Natural killer cell (primary cell): ENCODE measurements at regions of chr6 and their contacts with region 1.

Region 1: GRCh38 chr6:107847844-107848802 is 24.0 kb upstream of the SCML4 start:
- DNase-seq: peak; percentile 80 to 85
- ATAC-seq: peak; percentile 86 to 94 (median 94)
- H3K4me3 ChIP-seq: peak overlapping the region; percentile 7
- H3K4me3 Mint-ChIP-seq: peak overlapping the region; percentile 78
- H3K27ac ChIP-seq: no peak overlapping the region
- H3K27ac Mint-ChIP-seq: peak overlapping the region in 1 of 2 donors; percentile 51
- H3K4me1 ChIP-seq: peaks cover 12% of the 10 kb centered on the region
- H3K4me1 Mint-ChIP-seq: peaks cover 0 to 12% of the 10 kb centered on the region in 2 donors
- H3K27me3 ChIP-seq: peaks cover 2% of the 10 kb centered on the region
- H3K27me3 Mint-ChIP-seq: no peaks in the 10 kb centered on the region
- CTCF ChIP-seq: peak; percentile 98

Region 2: DNA sequence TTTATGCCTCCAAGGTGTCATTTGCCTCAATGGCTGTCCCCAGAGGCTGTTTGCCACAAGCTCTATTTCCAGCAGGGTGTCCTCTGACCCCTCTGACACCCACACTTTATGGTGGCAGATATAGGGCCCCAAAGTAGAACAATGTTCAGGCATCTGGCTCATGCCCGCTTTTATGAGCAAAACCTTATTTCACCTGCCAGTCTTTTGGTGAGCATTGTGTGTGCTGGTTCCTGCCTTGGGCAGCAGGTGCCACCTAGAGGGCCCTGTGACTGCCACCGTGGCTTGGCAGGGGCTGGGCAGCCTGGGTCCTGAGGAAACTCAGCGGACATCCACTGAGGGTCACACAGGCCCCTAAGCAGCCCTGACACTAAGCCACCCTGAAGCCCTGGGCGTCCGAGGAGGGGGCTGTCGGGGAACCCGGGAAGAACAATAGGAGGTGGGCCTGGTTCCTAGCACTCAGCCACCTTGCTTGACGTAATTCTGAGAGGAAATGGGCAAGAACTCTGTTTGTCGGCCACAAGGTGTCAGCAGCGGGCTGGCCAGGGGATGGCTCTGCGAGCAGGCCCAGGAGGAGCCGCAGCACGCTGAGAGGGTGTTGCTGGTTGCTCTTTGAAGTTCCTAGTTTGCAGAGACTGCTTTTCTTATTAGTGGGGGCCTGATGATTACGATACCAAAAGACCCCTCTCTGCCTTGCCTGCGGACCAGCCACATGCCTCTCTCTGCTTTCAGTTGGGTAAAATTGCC is 173.0 kb before region 1 on chr6:
- intact Hi-C with region 1: loop called (anchors 1 kb)
- DNase-seq: peak; percentile 81 to 94
- ATAC-seq: peak; percentile 92 to 99 (median 99)
- H3K4me3 ChIP-seq: no peak overlapping the region
- H3K4me3 Mint-ChIP-seq: no peak overlapping the region
- H3K27ac ChIP-seq: peak overlapping the region; percentile 20
- H3K27ac Mint-ChIP-seq: peak overlapping the region in 1 of 2 donors; percentile 78
- H3K4me1 ChIP-seq: peaks cover 21% of the 10 kb centered on the region
- H3K4me1 Mint-ChIP-seq: peaks cover 8 to 11% of the 10 kb centered on the region in 2 donors
- H3K27me3 ChIP-seq: no peaks in the 10 kb centered on the region
- H3K27me3 Mint-ChIP-seq: peaks cover 0 to 6% of the 10 kb centered on the region in 2 donors
- CTCF ChIP-seq: peak; percentile 90

Region 3: DNA sequence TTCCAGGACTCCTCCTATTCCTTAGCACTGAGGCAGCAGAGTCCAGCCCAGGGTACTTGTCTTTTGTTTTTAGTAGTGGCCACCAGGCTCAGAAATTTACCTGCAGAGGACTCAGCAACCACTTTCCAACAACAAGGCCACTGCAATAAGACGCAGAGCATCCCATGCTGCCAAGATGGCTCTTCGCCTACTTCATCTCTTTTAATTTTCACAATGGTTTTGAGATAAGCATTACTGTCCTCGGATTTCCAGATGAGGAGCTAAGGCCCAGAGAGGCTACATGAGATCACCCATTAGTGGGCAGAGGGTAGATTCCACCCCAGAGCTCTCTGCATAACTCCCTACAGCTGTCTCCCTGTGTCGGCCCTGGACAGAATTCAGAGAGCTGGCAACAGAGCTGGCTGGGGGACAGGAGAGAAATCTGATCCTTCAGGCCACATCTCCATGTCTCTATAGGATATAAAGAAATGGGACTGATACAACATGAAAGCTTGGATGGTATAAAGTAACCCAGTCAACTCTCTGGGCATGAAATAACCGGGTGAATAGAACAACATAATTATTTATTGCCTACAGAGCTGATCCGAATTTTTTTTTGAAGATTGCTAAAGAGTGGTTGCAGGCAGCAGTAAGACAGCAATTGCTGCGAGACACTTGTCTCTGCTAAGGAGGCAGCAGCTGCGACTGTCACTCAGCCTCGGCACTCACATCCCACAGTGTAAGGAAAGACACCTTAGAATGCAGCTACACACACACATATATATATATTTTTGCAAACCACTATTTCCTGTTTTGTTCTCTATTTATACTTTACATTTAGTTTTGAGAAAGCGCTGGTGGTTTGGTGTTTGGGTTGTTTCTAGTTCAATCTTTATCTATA is 61.2 kb before region 1 on chr6:
- intact Hi-C with region 1: loop called (anchors 5 kb)
- DNase-seq: peak in 1 of 2 donors; percentile 70
- ATAC-seq: peak; percentile 80 to 87 (median 85)
- H3K4me3 ChIP-seq: no peak overlapping the region
- H3K4me3 Mint-ChIP-seq: peak overlapping the region; percentile 77
- H3K27ac ChIP-seq: peak overlapping the region; percentile 50
- H3K27ac Mint-ChIP-seq: peak overlapping the region; percentile 84 to 87
- H3K4me1 ChIP-seq: peaks cover 65% of the 10 kb centered on the region
- H3K4me1 Mint-ChIP-seq: peaks cover 61 to 70% of the 10 kb centered on the region in 2 donors
- H3K27me3 ChIP-seq: no peaks in the 10 kb centered on the region
- H3K27me3 Mint-ChIP-seq: no peaks in the 10 kb centered on the region
- CTCF ChIP-seq: no peak

Region 4: GRCh38 chr6:107800564-107801164 is 47.5 kb before region 1 on chr6:
- intact Hi-C with region 1: loop called (anchors 2 kb)
- DNase-seq: peak in 1 of 2 donors; percentile 59
- ATAC-seq: peak in 2 of 3 donors; percentile 57
- H3K4me3 ChIP-seq: no peak overlapping the region
- H3K4me3 Mint-ChIP-seq: no peak overlapping the region
- H3K27ac ChIP-seq: no peak overlapping the region
- H3K27ac Mint-ChIP-seq: no peak overlapping the region
- H3K4me1 ChIP-seq: peaks cover under 1% of the 10 kb centered on the region
- H3K4me1 Mint-ChIP-seq: peaks cover 18 to 55% of the 10 kb centered on the region in 2 donors
- H3K27me3 ChIP-seq: no peaks in the 10 kb centered on the region
- H3K27me3 Mint-ChIP-seq: no peaks in the 10 kb centered on the region
- CTCF ChIP-seq: peak; percentile 37